Activated CD4-positive, alpha-beta memory T cell treated with anti-CD3 and anti-CD28 coated beads for 36 hours (primary cell): ENCODE measurements at regions of chr5 and their contacts with region 1.

Region 1: DNA sequence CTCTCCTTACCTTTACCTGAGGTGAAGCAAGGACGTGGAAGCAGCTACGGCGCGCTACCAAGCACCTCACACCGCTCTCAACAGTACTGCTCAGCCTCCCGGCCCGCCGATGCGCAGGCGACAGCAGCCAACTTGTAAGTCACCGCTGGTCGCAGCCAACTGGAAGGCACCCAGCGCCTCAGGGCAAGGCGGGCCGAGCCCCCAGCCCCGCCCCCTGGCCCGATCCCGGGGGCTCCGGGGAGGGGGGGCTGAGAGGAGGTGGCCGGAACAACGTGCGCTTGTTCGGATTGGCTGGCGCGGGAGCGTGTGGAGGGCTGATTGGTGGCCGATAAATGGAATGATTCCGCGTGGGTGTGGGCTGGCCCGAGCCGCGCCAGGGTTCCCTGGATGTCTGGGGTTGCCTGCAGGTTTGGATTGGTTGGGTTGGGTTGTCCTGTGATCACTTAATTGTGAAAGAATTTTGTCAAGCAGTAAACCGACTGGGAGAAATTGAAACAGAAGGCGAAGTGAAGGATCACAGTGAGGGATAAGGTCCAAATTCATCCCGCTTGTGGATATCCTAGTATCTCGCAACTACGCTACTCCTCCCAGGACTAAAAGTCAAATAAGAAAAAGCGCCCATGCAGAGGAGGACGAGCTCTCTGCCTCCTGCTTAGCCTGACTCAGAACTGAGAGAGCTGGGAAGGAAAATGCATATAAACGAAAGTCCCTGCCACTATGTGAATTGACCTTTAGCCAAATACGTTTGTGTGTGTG is at the start of gene STARD4:
- DNase-seq: peak; percentile 96
- H3K4me3 Mint-ChIP-seq: peak within 1 kb of the TSS; percentile 88
- H3K27ac Mint-ChIP-seq: peak within 1 kb of the TSS; percentile 94
- H3K4me1 Mint-ChIP-seq: peaks cover 35% of the 10 kb centered on the region
- H3K27me3 Mint-ChIP-seq: no peaks in the 10 kb centered on the region
- total RNA-seq, gene STARD4: 49.5 to 49.9 TPM

Region 2: GRCh38 chr5:111092062-111092853 is 420.3 kb before region 1 on chr5 and contains the start of gene WDR36:
- CTCF ChIA-PET with region 1: no interaction called
- POLR2A ChIA-PET with region 1: no interaction called
- intact Hi-C with region 1: loop called (anchors 1 kb)
- DNase-seq: peak; percentile 93
- H3K4me3 Mint-ChIP-seq: peak within 1 kb of the TSS; percentile 92
- H3K27ac Mint-ChIP-seq: peak within 1 kb of the TSS; percentile 94
- H3K4me1 Mint-ChIP-seq: peaks cover 38% of the 10 kb centered on the region
- H3K27me3 Mint-ChIP-seq: peaks cover 3% of the 10 kb centered on the region
- total RNA-seq, gene WDR36: 43.5 to 44.1 TPM

Region 3: GRCh38 chr5:111278845-111279504 is 233.6 kb before region 1 on chr5:
- CTCF ChIA-PET with region 1: interaction called, 7 read pairs
- POLR2A ChIA-PET with region 1: no interaction called
- intact Hi-C with region 1: loop called (anchors 5 kb)
- DNase-seq: peak; percentile 92
- H3K4me3 Mint-ChIP-seq: no peak overlapping the region
- H3K27ac Mint-ChIP-seq: no peak overlapping the region
- H3K4me1 Mint-ChIP-seq: peaks cover 60% of the 10 kb centered on the region
- H3K27me3 Mint-ChIP-seq: no peaks in the 10 kb centered on the region

Region 4: GRCh38 chr5:111411301-111411700 is 101.3 kb before region 1 on chr5:
- CTCF ChIA-PET with region 1: no interaction called
- POLR2A ChIA-PET with region 1: no interaction called
- intact Hi-C with region 1: no loop called
- DNase-seq: no peak
- H3K4me3 Mint-ChIP-seq: no peak overlapping the region
- H3K27ac Mint-ChIP-seq: no peak overlapping the region
- H3K4me1 Mint-ChIP-seq: peaks cover 5% of the 10 kb centered on the region
- H3K27me3 Mint-ChIP-seq: no peaks in the 10 kb centered on the region

Region 5: DNA sequence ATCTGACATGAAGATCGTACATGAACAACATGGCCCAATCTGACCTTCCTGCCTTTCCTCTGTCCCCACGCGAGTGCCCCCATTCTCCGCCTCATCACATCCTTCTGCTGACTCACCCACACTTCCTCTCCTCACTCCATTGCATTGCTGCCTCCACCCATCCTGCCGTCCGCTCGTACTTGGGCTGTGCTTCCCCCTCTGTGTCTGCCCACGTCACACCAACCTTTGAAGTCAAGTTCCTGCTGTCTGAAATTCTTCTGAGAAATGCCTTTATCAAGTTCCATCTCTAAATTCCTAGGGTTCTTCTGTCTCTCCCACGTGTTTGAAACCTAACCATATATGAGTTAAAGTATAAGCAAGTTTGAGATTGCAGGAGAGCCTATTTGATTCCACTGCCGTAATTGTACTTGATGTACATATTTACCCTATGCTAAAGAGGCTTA is 17.8 kb after region 1 on chr5:
- CTCF ChIA-PET with region 1: interaction called, 41 read pairs
- POLR2A ChIA-PET with region 1: interaction called, 3 read pairs
- intact Hi-C with region 1: loop called (anchors 1 kb)
- DNase-seq: peak; percentile 88
- H3K4me3 Mint-ChIP-seq: peak overlapping the region; percentile 54
- H3K27ac Mint-ChIP-seq: peak overlapping the region; percentile 85
- H3K4me1 Mint-ChIP-seq: peaks cover 17% of the 10 kb centered on the region
- H3K27me3 Mint-ChIP-seq: no peaks in the 10 kb centered on the region